Left ventricle myocardium superior (tissue), 1 donor: ENCODE measurements at regions of chr7 and their contacts with region 1.

Region 1: DNA sequence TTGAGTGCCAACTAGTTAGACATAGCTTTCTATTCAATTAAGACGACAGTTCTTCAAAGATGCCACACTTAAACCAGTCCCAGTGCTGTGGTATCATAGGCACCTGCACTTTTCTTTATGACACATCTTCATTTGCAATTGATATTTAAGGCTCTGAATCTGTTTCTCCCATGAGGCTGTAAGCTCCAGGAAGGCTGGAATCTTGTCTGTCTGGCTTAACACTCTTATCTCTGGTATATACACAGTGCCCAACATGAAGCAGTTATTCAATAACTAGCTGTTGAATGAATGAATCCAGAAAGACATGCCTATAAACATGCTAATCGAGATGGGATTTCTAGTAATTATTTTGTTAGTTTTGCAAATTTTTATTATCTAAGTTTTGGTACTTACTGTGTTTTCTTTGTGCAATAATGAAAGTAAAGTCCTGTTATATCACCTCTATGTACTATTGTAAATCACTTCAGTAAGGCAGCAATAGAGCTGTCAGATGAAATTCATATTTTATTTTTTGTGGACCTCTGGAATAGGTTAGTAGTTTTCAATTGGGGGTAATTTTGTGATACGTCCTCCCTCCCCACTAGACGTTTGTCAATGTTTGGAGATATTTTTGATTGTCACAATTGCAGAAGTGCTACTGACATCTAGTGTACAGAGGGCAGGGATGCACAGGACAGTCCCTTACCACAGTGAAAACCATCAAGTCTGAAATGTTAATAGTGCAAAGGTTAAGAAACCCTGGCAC is 51.3 kb upstream of the STEAP4 start:
- DNase-seq: no peak
- ATAC-seq: peak; percentile 92

Region 2: DNA sequence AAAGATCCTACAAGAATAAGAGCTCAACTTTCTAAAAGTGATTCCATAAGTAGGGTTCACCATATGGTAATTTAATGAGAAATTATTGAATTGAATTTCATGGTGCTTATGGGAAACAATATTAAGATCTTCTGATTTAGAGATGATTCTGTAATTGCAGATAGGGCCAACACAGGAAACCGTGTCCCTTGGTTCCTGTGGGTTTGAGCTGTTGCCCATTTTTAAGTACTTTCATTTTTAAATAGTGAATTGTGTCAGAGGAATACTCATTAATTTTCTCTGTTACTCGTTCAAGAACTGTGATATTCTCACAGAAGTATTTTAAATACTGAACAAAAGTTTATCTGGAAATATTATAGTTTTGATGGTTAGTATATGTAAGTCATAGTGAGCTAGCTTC is 267.3 kb before region 1 on chr7:
- intact Hi-C with region 1: no loop called
- DNase-seq: no peak
- ATAC-seq: peak; percentile 49

Region 3: DNA sequence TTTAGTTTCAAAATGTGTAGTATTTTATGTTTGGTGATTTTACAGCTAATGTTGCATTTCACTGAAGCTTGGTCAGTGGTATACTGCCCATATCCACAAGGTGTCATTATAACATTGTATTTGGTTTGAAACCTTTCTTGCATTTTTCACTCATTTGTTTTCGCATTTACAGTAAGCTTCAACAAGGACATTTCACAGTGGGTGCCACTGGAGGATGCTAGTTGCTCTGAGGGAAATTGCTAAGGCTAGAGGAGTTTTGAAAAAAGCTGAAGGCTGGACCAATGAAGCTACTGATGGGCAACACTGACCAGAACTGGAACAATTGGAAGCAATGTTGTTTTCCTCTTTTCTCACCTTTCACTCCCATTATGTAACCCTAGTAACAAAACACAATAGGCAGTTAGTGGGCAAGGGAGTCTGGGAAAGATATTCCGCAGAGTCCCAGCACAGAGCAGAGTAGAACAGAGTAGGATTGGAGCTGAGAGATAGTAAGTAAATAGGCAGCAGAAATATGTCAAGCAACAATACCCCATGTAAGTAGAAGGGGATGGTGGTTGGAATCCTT is 114.5 kb before region 1 on chr7:
- intact Hi-C with region 1: loop called (anchors 1 kb)
- DNase-seq: no peak
- ATAC-seq: peak; percentile 91

Region 4: DNA sequence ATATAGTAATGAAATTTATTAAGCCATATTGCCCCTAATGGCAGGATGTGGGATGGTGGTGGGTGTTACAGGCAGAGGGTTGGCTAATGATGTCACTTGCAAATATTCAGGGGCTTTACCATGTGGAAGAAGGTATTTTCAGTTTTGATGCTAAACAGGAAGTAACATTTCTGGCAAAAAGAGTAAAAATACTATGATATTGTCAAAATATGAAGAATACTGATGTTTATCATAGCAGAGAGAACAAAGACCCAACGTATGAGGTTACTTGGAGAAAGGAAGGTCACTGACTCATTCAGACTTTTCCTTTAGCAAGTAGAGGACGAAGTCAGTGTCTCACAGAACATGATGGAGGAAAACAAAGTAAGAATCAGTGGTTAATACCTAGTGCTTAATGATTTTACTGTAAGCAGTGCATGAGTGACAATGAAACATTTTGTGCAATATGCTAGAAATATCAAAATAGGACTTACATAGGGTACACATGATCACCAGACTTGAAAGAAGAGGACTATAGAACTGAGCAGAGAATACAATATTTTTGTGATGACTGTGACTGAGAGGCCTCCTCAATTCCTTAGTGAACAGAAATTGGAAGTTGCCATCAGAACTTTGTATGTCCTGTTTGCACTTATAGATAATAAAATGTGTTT is 38.5 kb after region 1 on chr7:
- intact Hi-C with region 1: no loop called
- DNase-seq: no peak
- ATAC-seq: no peak